ENCODE measurements at regions of chr13 and their contacts with region 1.

Region 1: GRCh38 chr13:97109841-97110492 is 112.2 kb upstream of the MBNL2 start:
- DNase-seq: peak; percentile 79
- H3K4me3 Mint-ChIP-seq: no peak overlapping the region
- H3K27ac Mint-ChIP-seq: no peak overlapping the region
- H3K4me1 Mint-ChIP-seq: peaks cover 6% of the 10 kb centered on the region
- H3K27me3 Mint-ChIP-seq: peaks cover 35% of the 10 kb centered on the region

Region 2: DNA sequence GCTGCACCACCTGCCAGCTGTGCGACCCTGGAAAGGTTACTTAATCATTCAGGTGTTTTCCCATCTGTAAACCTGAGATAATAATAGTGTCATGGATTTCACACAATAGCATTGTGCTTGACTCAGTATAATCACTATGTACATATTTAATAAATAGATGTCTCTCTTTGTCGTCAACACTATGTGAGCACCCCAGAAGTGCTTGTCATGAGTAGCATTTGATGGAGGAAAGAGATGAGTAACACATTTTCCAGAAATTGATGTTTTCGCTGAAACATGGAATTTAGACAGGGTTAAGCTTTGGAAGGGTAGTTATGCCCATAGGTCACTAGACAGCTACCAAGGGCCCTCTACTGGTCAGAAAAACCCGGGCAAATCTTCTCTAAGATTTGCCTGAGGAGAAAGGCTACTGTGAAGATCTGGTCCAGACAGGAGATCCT is 102.7 kb after region 1 on chr13:
- CTCF ChIA-PET with region 1: interaction called, 23 read pairs
- DNase-seq: no peak
- H3K4me3 Mint-ChIP-seq: no peak overlapping the region
- H3K27ac Mint-ChIP-seq: no peak overlapping the region
- H3K4me1 Mint-ChIP-seq: peaks cover 42% of the 10 kb centered on the region
- H3K27me3 Mint-ChIP-seq: peaks cover 4% of the 10 kb centered on the region

Region 3: DNA sequence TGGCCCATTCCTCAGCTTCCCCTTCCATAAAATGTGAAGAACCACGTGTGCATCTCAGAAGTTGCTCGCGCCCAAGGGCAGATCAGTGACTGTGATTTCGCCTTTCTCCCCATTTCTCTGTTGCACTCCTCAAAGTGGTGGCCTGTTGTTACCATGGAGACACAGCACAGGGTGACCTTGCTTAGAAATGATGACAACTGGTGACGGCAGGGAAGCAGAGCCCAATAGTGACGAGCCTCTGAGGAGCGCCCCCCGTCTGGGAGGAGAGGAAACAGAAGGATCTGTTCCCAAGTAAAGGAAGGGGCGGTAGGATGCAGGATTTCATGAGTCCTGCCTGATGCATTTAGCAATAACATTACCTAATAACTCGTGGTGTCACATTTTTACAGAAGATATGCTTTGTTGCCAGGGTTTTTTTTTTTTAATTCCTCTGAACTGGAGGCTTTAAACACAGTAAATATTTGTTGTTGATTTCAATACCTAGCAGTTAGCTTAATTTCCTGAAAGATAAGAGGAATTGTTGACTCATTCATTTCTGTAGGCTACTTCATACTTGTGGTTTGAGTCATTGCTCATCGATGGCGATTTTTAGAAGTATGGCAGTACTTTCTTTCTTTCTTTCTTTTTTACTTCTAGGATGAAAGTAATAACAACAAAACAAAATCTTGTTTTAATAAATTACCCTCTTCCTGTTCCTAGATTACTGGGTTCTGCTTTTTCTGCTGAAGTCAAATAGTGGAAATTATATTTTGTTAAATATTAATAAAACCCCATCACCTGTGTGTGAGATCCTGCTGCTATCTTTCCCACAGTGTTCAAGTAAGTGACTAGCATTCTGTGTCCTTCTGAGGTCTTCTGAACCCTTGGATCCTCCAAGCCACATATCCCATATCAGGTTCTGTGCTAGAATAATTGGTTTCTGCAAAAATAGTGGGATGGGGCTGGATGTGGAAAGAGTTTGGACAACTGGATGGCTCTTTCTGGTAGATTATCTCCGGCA is 148.1 kb after region 1 on chr13:
- CTCF ChIA-PET with region 1: no interaction called
- DNase-seq: no peak
- H3K4me3 Mint-ChIP-seq: no peak overlapping the region
- H3K27ac Mint-ChIP-seq: peak overlapping the region; percentile 54
- H3K4me1 Mint-ChIP-seq: peaks cover 48% of the 10 kb centered on the region
- H3K27me3 Mint-ChIP-seq: no peaks in the 10 kb centered on the region

Region 4: GRCh38 chr13:97344265-97345175 is 234.6 kb after region 1 on chr13:
- CTCF ChIA-PET with region 1: interaction called, 90 read pairs
- DNase-seq: peak; percentile 70
- H3K4me3 Mint-ChIP-seq: no peak overlapping the region
- H3K27ac Mint-ChIP-seq: no peak overlapping the region
- H3K4me1 Mint-ChIP-seq: peaks cover 5% of the 10 kb centered on the region
- H3K27me3 Mint-ChIP-seq: no peaks in the 10 kb centered on the region

Region 5: DNA sequence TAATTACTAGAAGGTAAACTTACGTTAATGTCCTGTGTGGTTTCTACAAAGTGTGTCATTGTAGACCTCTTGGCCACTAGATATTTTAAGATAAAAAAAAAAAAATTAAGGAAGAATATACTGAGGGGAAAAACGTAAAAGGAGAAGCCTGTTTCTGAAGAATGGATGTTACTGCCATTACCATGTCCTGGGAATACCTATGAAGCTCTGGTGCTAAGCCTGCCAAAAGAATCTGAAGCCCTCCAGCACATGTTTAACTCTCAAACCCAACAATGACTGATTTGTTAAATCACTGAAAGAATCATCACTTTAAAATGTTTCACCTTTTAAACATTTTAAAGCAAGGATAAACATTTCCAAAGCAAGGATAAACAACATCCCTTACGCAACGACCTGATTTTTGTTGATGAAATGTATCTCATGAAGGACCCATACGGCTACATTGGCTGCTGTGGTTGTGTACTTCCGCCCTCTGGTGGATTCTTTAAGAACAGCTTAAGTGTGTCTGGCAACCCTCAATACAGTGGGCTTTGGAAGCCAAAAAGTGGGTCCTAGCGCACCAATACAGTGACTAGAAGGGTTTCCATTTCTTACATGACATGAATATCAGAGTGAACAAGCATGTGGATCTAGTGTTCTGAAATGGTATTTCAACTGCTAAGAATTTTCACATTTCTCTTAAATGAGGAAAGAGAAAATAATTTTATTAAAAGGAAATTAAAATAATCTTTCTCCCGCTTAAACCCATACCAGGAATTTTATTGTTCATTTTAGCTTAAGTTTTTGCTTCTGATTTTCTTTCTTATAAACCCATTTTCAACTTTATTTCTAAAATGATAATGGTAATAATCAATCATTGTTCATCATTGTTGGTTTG is 249.5 kb after region 1 on chr13:
- CTCF ChIA-PET with region 1: interaction called, 149 read pairs
- DNase-seq: peak; percentile 56
- H3K4me3 Mint-ChIP-seq: no peak overlapping the region
- H3K27ac Mint-ChIP-seq: no peak overlapping the region
- H3K4me1 Mint-ChIP-seq: no peaks in the 10 kb centered on the region
- H3K27me3 Mint-ChIP-seq: no peaks in the 10 kb centered on the region